CD4-positive, alpha-beta T cell (primary cell): ENCODE measurements at regions of chr12 and their contacts with region 1.

Region 1: DNA sequence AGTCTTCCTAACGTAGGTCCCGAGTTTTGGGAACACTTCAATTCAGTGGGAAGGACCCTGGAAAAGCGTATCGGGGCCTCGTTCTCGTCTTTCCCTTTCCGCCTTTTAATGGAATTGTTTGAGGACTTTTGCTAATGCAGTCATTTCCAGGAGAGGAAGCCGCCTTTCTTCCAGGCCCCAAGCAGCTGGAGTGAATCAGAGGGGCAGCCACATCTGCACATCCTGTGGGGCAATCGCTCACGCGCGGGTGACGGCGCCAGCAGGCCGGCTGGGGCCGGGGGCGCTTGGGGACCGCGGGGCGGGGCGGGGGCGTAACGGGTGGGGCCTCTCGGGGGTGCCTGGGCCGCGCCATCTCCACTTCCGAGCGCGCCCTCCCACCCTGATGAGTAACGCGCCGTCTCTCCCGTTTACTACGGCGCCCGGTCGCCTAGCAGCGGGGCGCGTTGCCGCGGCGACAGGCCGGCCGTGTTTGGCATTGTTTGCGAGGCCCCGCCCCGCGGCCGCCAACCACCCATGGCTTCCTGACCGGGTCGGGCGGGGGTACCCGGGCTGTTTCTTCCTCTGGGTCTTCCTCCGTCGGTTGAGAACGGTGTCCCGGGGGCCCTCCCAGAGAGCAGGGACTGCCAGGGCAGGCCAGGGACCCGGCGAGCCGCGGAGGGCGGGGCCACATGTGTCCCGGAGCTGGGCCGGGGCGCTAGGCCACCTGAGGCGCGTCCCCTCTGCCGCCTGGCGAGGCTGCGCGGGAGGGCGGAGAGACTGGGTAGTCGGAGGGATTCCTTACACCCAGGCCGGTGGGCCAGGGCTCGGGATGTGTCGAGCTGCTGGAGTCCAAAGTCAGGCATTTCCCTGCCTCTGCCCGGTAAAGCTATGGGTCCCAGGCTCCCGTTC is 2.3 kb downstream of the GSG1 start:
- DNase-seq: peak; percentile 87 to 98 (median 92)
- ATAC-seq: peak; percentile 87
- H3K4me3 ChIP-seq: peak overlapping the region; percentile 64
- H3K4me3 Mint-ChIP-seq: peak overlapping the region; percentile 87
- H3K27ac ChIP-seq: peak overlapping the region; percentile 93 to 94
- H3K27ac Mint-ChIP-seq: peak overlapping the region; percentile 94
- H3K4me1 ChIP-seq: peaks cover 38% of the 10 kb centered on the region
- H3K4me1 Mint-ChIP-seq: peaks cover 53% of the 10 kb centered on the region
- H3K27me3 ChIP-seq: no peaks in the 10 kb centered on the region
- H3K27me3 Mint-ChIP-seq: no peaks in the 10 kb centered on the region
- CTCF ChIP-seq: no peak

Region 2: GRCh38 chr12:12999959-13000615 is 101.0 kb before region 1 on chr12 and contains the start of gene HEBP1:
- CTCF ChIA-PET with region 1: interaction called, 3 read pairs
- POLR2A ChIA-PET with region 1: no interaction called
- intact Hi-C with region 1: loop called (anchors 2 kb)
- DNase-seq: peak; percentile 92 to 98 (median 96)
- ATAC-seq: peak; percentile 87
- H3K4me3 ChIP-seq: peak within 1 kb of the TSS; percentile 95
- H3K4me3 Mint-ChIP-seq: peak within 1 kb of the TSS; percentile 93
- H3K27ac ChIP-seq: peak within 1 kb of the TSS; percentile 32 to 45
- H3K27ac Mint-ChIP-seq: peak within 1 kb of the TSS; percentile 89
- H3K4me1 ChIP-seq: peaks cover 29% of the 10 kb centered on the region
- H3K4me1 Mint-ChIP-seq: peaks cover 42% of the 10 kb centered on the region
- H3K27me3 ChIP-seq: peaks cover 0 to 3% of the 10 kb centered on the region in 2 experiments
- H3K27me3 Mint-ChIP-seq: no peaks in the 10 kb centered on the region
- CTCF ChIP-seq: no peak
- total RNA-seq, gene HEBP1: 11.9 to 12.5 TPM

Region 3: GRCh38 chr12:13163868-13164670 is 62.9 kb after region 1 on chr12:
- CTCF ChIA-PET with region 1: no interaction called
- POLR2A ChIA-PET with region 1: interaction called, 3 read pairs
- intact Hi-C with region 1: loop called in 1 of 2 experiments (anchors 2 kb)
- DNase-seq: no peak
- ATAC-seq: no peak
- H3K4me3 ChIP-seq: no peak overlapping the region
- H3K4me3 Mint-ChIP-seq: no peak overlapping the region
- H3K27ac ChIP-seq: no peak overlapping the region
- H3K27ac Mint-ChIP-seq: no peak overlapping the region
- H3K4me1 ChIP-seq: peaks cover 24% of the 10 kb centered on the region
- H3K4me1 Mint-ChIP-seq: peaks cover 26% of the 10 kb centered on the region
- H3K27me3 ChIP-seq: no peaks in the 10 kb centered on the region
- H3K27me3 Mint-ChIP-seq: no peaks in the 10 kb centered on the region
- CTCF ChIP-seq: no peak

Region 4: DNA sequence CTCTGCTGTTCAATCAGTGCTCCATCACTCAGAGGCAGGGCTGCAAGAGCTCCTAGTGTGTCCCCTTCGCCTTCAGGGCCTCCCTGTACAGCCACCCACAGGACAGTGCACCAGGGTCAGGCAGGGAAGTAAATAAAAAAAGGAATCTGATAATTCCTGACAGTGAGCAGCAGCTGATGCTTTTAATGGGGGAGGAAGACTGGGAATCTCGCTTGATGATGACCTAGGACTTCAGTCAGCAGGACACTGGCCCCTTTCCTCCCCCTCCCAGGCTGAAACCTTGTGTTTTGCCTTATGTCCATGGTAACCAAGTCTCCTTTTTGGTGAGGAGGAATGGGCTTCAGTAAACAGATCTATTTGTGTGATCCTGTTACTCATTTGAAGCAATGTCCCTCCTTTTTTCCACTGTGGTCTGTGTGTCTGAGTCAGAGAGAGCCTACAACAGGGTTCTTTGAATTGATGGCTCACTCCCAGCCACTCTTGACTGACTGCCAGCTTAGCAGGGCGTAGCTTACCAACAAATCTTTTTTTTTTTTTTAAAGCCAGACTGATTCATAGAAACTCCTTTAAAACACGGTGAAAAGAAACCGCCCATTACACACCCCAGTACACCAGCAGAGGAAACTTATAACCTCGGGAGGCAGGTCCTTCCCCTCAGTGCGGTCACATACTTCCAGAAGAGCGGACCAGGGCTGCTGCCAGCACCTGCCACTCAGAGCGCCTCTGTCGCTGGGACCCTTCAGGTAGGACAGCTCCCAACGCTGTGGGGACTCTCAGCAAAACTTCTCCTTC is 95.2 kb after region 1 on chr12 and contains the start of gene EMP1:
- CTCF ChIA-PET with region 1: interaction called, 4 read pairs
- POLR2A ChIA-PET with region 1: interaction called, 6 read pairs
- intact Hi-C with region 1: loop called in 1 of 2 experiments (anchors 1 kb)
- DNase-seq: peak; percentile 20 to 89 (median 68)
- ATAC-seq: peak; percentile 91
- H3K4me3 ChIP-seq: peak within 1 kb of the TSS; percentile 46
- H3K4me3 Mint-ChIP-seq: peak within 1 kb of the TSS; percentile 83
- H3K27ac ChIP-seq: no peak within 1 kb of the TSS
- H3K27ac Mint-ChIP-seq: peak within 1 kb of the TSS; percentile 70
- H3K4me1 ChIP-seq: peaks cover 18% of the 10 kb centered on the region
- H3K4me1 Mint-ChIP-seq: peaks cover 21% of the 10 kb centered on the region
- H3K27me3 ChIP-seq: no peaks in the 10 kb centered on the region
- H3K27me3 Mint-ChIP-seq: no peaks in the 10 kb centered on the region
- CTCF ChIP-seq: no peak
- total RNA-seq, gene EMP1: 9.0 to 9.1 TPM